H1 (cell line): ENCODE measurements at regions of chr2 and their contacts with region 1.

Region 1: GRCh38 chr2:205579335-205579734 is 103.0 kb upstream of the NRP2 start:
- DNase-seq: no peak
- H3K4me3 ChIP-seq: no peak overlapping the region
- H3K27ac ChIP-seq: no peak overlapping the region
- H3K4me1 ChIP-seq: no peaks in the 10 kb centered on the region
- H3K27me3 ChIP-seq: no peaks in the 10 kb centered on the region
- CTCF ChIP-seq: no peak
- EP300 ChIP-seq: no peak
- POLR2A ChIP-seq: no peak
- RAD21 ChIP-seq: no peak

Region 2: GRCh38 chr2:205564346-205565151 is 14.8 kb before region 1 on chr2:
- CTCF ChIA-PET with region 1: interaction called, 19 read pairs
- POLR2A ChIA-PET with region 1: no interaction called
- DNase-seq: no peak
- H3K4me3 ChIP-seq: no peak overlapping the region
- H3K27ac ChIP-seq: no peak overlapping the region
- H3K4me1 ChIP-seq: no peaks in the 10 kb centered on the region
- H3K27me3 ChIP-seq: no peaks in the 10 kb centered on the region
- CTCF ChIP-seq: peak; percentile 5 to 41 (median 29); a peak in 3 of 4 replicates
- EP300 ChIP-seq: no peak
- POLR2A ChIP-seq: no peak
- RAD21 ChIP-seq: peak; percentile 20 to 47; a peak in 3 of 4 replicates